MCF 10A (cell line): ENCODE measurements at regions of chr6 and their contacts with region 1.

Region 1: GRCh38 chr6:159941286-159942113 is 27.4 kb upstream of the IGF2R start:
- DNase-seq: peak; percentile 58
- H3K4me3 Mint-ChIP-seq: no peak overlapping the region
- H3K27ac Mint-ChIP-seq: no peak overlapping the region
- H3K4me1 Mint-ChIP-seq: peaks cover 13% of the 10 kb centered on the region
- H3K27me3 Mint-ChIP-seq: no peaks in the 10 kb centered on the region
- CTCF ChIP-seq: peak; percentile 51

Region 2: DNA sequence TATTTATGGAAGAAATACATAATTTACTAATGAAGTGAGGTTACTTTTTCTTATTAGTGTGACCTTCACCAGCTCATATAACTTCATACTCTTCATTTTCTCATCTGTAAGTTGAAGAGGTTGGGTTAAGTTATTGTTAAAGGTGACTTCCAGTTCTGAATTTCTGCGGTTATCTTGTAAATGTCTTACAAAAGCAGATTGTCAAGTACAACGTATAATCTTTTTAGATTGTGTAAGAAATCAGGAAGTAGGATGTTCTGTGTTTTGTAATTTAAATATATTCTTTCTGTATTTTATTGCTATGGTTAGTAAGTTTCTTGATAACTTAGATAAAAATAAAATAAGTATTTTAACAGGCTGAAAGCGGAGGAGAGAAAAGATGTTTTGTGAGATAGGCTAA is 202.2 kb before region 1 on chr6:
- CTCF ChIA-PET with region 1: no interaction called
- POLR2A ChIA-PET with region 1: no interaction called
- intact Hi-C with region 1: no loop called
- DNase-seq: no peak
- H3K4me3 Mint-ChIP-seq: no peak overlapping the region
- H3K27ac Mint-ChIP-seq: no peak overlapping the region
- H3K4me1 Mint-ChIP-seq: peaks cover 11% of the 10 kb centered on the region
- H3K27me3 Mint-ChIP-seq: no peaks in the 10 kb centered on the region
- CTCF ChIP-seq: no peak

Region 3: DNA sequence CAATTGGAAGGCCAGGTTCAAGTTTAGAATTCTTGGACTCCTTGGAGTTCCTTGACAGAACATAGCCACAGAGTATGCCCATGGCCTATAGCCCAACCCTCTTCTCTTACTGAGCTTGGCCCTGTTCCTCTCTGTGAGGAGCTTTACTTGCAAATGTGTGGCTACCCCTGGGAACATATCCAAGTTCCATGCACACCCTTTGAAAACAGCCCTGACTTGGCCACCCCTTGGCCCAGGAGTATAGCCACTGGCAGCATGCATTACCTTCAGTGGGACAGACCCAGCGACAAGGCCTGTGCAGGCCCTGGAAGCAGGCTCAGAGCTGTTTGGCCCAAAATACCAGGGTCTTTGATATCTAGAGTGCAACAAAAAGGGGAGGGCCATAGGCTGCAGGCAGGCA is 70.3 kb before region 1 on chr6:
- CTCF ChIA-PET with region 1: interaction called, 153 read pairs
- POLR2A ChIA-PET with region 1: no interaction called
- intact Hi-C with region 1: no loop called
- DNase-seq: no peak
- H3K4me3 Mint-ChIP-seq: no peak overlapping the region
- H3K27ac Mint-ChIP-seq: no peak overlapping the region
- H3K4me1 Mint-ChIP-seq: no peaks in the 10 kb centered on the region
- H3K27me3 Mint-ChIP-seq: no peaks in the 10 kb centered on the region
- CTCF ChIP-seq: no peak

Region 4: GRCh38 chr6:159953091-159953601 is 11.6 kb after region 1 on chr6:
- CTCF ChIA-PET with region 1: interaction called, 17 read pairs
- POLR2A ChIA-PET with region 1: interaction called, 12 read pairs
- intact Hi-C with region 1: no loop called
- DNase-seq: peak; percentile 90
- H3K4me3 Mint-ChIP-seq: peak overlapping the region; percentile 35
- H3K27ac Mint-ChIP-seq: peak overlapping the region; percentile 44
- H3K4me1 Mint-ChIP-seq: peaks cover 9% of the 10 kb centered on the region
- H3K27me3 Mint-ChIP-seq: no peaks in the 10 kb centered on the region
- CTCF ChIP-seq: no peak

Region 5: GRCh38 chr6:160121981-160122380 is 180.5 kb after region 1 on chr6:
- CTCF ChIA-PET with region 1: no interaction called
- POLR2A ChIA-PET with region 1: no interaction called
- intact Hi-C with region 1: no loop called
- DNase-seq: no peak
- H3K4me3 Mint-ChIP-seq: no peak overlapping the region
- H3K27ac Mint-ChIP-seq: no peak overlapping the region
- H3K4me1 Mint-ChIP-seq: no peaks in the 10 kb centered on the region
- H3K27me3 Mint-ChIP-seq: no peaks in the 10 kb centered on the region
- CTCF ChIP-seq: no peak

Region 6: GRCh38 chr6:160477901-160478300 is 536.4 kb after region 1 on chr6:
- CTCF ChIA-PET with region 1: no interaction called
- POLR2A ChIA-PET with region 1: no interaction called
- intact Hi-C with region 1: no loop called
- DNase-seq: peak; percentile 69
- H3K4me3 Mint-ChIP-seq: no peak overlapping the region
- H3K27ac Mint-ChIP-seq: no peak overlapping the region
- H3K4me1 Mint-ChIP-seq: peaks cover 7% of the 10 kb centered on the region
- H3K27me3 Mint-ChIP-seq: no peaks in the 10 kb centered on the region
- CTCF ChIP-seq: no peak